ENCODE measurements at regions of chr17 and their contacts with region 1.

Region 1: GRCh38 chr17:7136266-7136877 is 21.8 kb upstream of the ASGR2 start:
- DNase-seq: peak; percentile 86
- ATAC-seq: no peak
- H3K4me3 ChIP-seq: no peak overlapping the region
- H3K4me3 Mint-ChIP-seq: no peak overlapping the region
- H3K27ac ChIP-seq: no peak overlapping the region
- H3K27ac Mint-ChIP-seq: peak overlapping the region; percentile 47
- H3K4me1 ChIP-seq: peaks cover 22 to 28% of the 10 kb centered on the region in 2 donors
- H3K4me1 Mint-ChIP-seq: peaks cover 25% of the 10 kb centered on the region
- H3K27me3 ChIP-seq: peaks cover 0 to 12% (median 3%) of the 10 kb centered on the region in 4 experiments
- H3K27me3 Mint-ChIP-seq: peaks cover 17% of the 10 kb centered on the region
- CTCF ChIP-seq: peak; percentile 95

Region 2: GRCh38 chr17:6843241-6843880 is 293.0 kb before region 1 on chr17:
- CTCF ChIA-PET with region 1: interaction called, 7 read pairs
- POLR2A ChIA-PET with region 1: no interaction called
- intact Hi-C with region 1: loop called (anchors 10 kb)
- DNase-seq: peak; percentile 67
- ATAC-seq: no peak
- H3K4me3 ChIP-seq: no peak overlapping the region
- H3K4me3 Mint-ChIP-seq: no peak overlapping the region
- H3K27ac ChIP-seq: no peak overlapping the region
- H3K27ac Mint-ChIP-seq: no peak overlapping the region
- H3K4me1 ChIP-seq: no peaks in the 10 kb centered on the region
- H3K4me1 Mint-ChIP-seq: no peaks in the 10 kb centered on the region
- H3K27me3 ChIP-seq: peaks cover 0 to 14% (median 8%) of the 10 kb centered on the region in 4 experiments
- H3K27me3 Mint-ChIP-seq: peaks cover 58% of the 10 kb centered on the region
- CTCF ChIP-seq: peak; percentile 81

Region 3: DNA sequence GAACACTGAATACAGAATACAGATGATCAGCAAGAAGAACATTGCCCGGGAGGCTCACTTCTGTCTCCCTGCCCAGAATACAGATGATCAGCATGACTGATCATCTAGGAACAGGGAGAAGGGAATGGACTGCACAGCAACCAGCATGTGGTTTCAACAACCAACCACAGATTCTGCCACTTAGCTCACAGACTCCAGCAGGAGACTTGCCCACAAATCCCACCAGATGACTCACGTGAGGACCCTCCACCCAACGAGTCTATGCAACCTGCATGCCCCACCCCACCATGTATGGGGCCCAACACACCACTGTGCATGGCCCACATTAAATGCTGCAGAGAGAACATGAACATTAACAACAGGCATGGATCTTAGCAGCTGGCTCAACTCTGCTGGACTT is 176.7 kb before region 1 on chr17:
- CTCF ChIA-PET with region 1: no interaction called
- POLR2A ChIA-PET with region 1: no interaction called
- intact Hi-C with region 1: no loop called
- DNase-seq: no peak
- ATAC-seq: no peak
- H3K4me3 ChIP-seq: no peak overlapping the region
- H3K4me3 Mint-ChIP-seq: no peak overlapping the region
- H3K27ac ChIP-seq: no peak overlapping the region
- H3K27ac Mint-ChIP-seq: no peak overlapping the region
- H3K4me1 ChIP-seq: no peaks in the 10 kb centered on the region
- H3K4me1 Mint-ChIP-seq: no peaks in the 10 kb centered on the region
- H3K27me3 ChIP-seq: no peaks in the 10 kb centered on the region
- H3K27me3 Mint-ChIP-seq: peaks cover 12% of the 10 kb centered on the region
- CTCF ChIP-seq: no peak

Region 4: DNA sequence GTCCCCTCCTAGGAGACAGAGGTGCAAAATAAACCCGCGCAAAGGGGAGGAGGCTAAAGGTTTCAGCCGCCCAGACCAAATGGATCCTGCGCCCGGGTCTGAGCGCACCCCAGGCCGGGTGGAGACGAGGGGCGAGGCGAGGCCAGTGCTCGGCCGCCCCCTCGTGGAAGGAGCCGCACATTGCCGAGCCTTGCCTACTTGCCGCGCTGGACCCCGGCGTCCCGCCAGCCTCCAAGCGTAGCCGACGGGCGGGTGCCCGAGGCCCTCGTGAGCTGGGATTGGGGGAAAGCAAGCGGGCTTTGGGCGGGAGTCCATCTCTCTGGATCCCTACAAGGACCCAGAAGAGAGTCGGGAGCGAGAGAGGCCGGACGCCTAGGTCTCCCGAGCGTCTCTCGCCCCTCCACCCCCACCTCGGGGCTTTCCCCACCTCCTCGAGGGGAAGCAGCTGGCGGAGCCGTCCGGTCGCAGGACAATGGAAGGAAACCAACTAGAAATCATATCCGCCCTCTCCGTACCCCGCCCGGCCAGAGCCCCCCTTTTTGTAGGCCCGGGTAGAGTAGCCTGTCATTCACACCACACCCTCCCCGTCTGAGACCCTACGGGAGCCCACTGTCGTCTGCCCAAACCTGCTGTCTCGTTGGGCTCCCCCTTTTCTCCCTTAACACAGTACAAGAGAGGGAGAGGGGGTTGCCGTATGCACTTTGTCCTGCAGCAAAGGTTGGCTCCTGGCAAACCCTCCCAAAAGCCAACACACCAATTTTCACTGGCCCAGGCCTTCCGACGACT is 114.2 kb before region 1 on chr17:
- CTCF ChIA-PET with region 1: interaction called, 10 read pairs
- POLR2A ChIA-PET with region 1: no interaction called
- intact Hi-C with region 1: no loop called
- DNase-seq: peak; percentile 92
- ATAC-seq: peak; percentile 82
- H3K4me3 ChIP-seq: peak overlapping the region in 4 of 5 experiments; percentile 44 to 71 (median 62)
- H3K4me3 Mint-ChIP-seq: peak overlapping the region; percentile 82
- H3K27ac ChIP-seq: peak overlapping the region; percentile 73 to 80
- H3K27ac Mint-ChIP-seq: peak overlapping the region; percentile 92
- H3K4me1 ChIP-seq: peaks cover 21 to 27% of the 10 kb centered on the region in 2 donors
- H3K4me1 Mint-ChIP-seq: peaks cover 28% of the 10 kb centered on the region
- H3K27me3 ChIP-seq: no peaks in the 10 kb centered on the region
- H3K27me3 Mint-ChIP-seq: no peaks in the 10 kb centered on the region
- CTCF ChIP-seq: peak; percentile 98

Region 5: GRCh38 chr17:7095625-7096024 is 40.7 kb before region 1 on chr17:
- CTCF ChIA-PET with region 1: interaction called, 12 read pairs
- POLR2A ChIA-PET with region 1: interaction called, 16 read pairs
- intact Hi-C with region 1: loop called (anchors 5 kb)
- DNase-seq: peak; percentile 69
- ATAC-seq: peak; percentile 57
- H3K4me3 ChIP-seq: peak overlapping the region in 1 of 5 experiments; percentile 51
- H3K4me3 Mint-ChIP-seq: peak overlapping the region; percentile 77
- H3K27ac ChIP-seq: peak overlapping the region; percentile 12 to 18
- H3K27ac Mint-ChIP-seq: peak overlapping the region; percentile 88
- H3K4me1 ChIP-seq: peaks cover 35 to 41% of the 10 kb centered on the region in 2 donors
- H3K4me1 Mint-ChIP-seq: peaks cover 38% of the 10 kb centered on the region
- H3K27me3 ChIP-seq: no peaks in the 10 kb centered on the region
- H3K27me3 Mint-ChIP-seq: peaks cover 9% of the 10 kb centered on the region
- CTCF ChIP-seq: no peak

Region 6: GRCh38 chr17:7204828-7205461 is 68.6 kb after region 1 on chr17:
- CTCF ChIA-PET with region 1: interaction called, 4 read pairs
- POLR2A ChIA-PET with region 1: interaction called, 9 read pairs
- intact Hi-C with region 1: loop called (anchors 1 kb)
- DNase-seq: peak; percentile 99
- ATAC-seq: peak; percentile 85
- H3K4me3 ChIP-seq: peak overlapping the region in 4 of 5 experiments; percentile 49 to 65 (median 55)
- H3K4me3 Mint-ChIP-seq: peak overlapping the region; percentile 82
- H3K27ac ChIP-seq: peak overlapping the region; percentile 86 to 93
- H3K27ac Mint-ChIP-seq: peak overlapping the region; percentile 91
- H3K4me1 ChIP-seq: peaks cover 17 to 25% of the 10 kb centered on the region in 2 donors
- H3K4me1 Mint-ChIP-seq: peaks cover 28% of the 10 kb centered on the region
- H3K27me3 ChIP-seq: no peaks in the 10 kb centered on the region
- H3K27me3 Mint-ChIP-seq: peaks cover under 1% of the 10 kb centered on the region
- CTCF ChIP-seq: no peak